Activated T-helper 1 cell treated with anti-CD3 and anti-CD28 coated beads, Interleukin-12 subunit alpha, Interleukin-12 subunit beta, Interleukin-2, Interleukin-4 antibody, amounts not matched to agents 30 ng/mL and 10 ng/mL and 1 ng/mL, durations not matched to agents 14 hours and 24 hours and 36 hours (primary cell): ENCODE measurements at regions of chr2 and their contacts with region 1.

Region 1: GRCh38 chr2:64260817-64261216 is 116.6 kb upstream of the PELI1 start:
- DNase-seq: peak; percentile 29
- H3K4me3 Mint-ChIP-seq: peak overlapping the region; percentile 68
- H3K27ac Mint-ChIP-seq: peak overlapping the region; percentile 87
- H3K4me1 Mint-ChIP-seq: peaks cover 10% of the 10 kb centered on the region
- H3K27me3 Mint-ChIP-seq: peaks cover 2% of the 10 kb centered on the region

Region 2: DNA sequence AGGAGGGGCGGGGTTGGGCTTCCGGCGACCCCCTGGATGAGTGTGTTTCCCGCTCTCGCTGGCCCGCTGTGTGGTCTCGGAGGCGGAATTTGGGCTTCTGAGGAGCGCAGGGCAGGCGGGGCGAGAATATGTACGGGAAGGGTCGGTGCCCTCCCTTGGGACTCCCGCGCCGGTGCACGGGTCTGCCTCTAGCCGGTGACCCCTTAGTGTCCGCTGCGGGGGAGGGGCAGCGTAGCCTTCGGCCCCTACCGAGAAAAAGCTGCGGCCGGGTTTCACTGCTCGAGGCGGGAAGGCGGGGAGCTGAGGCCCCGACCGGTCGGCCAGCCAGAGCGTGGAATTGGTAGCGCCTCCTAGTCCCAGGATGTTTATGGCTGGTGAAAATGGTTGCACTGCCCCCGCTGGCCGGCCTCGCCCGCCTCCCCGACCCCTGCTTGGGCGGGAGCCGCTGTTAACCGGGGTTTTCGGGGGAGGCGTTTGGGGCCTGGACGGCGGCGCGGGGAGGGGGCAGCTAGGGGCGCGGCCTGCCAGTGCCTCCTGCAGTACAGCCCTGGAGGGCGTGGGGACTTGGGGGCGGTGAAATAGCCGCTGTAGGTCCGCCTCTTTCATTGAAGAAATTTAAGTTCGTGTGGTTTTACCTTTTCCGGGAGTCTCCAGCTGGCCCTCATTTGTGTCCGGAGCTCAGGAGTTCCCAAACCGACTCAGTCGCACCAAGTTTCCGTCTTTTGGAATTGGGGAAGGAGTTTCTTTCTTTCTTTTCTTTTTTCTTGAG is 419.4 kb before region 1 on chr2 and contains the start of gene UGP2:
- intact Hi-C with region 1: no loop called
- DNase-seq: peak; percentile 83
- H3K4me3 Mint-ChIP-seq: peak within 1 kb of the TSS; percentile 99
- H3K27ac Mint-ChIP-seq: peak within 1 kb of the TSS; percentile 99
- H3K4me1 Mint-ChIP-seq: peaks cover 47% of the 10 kb centered on the region
- H3K27me3 Mint-ChIP-seq: no peaks in the 10 kb centered on the region
- total RNA-seq, gene UGP2: 60.3 and 65.9 TPM in 2 replicates

Region 3: DNA sequence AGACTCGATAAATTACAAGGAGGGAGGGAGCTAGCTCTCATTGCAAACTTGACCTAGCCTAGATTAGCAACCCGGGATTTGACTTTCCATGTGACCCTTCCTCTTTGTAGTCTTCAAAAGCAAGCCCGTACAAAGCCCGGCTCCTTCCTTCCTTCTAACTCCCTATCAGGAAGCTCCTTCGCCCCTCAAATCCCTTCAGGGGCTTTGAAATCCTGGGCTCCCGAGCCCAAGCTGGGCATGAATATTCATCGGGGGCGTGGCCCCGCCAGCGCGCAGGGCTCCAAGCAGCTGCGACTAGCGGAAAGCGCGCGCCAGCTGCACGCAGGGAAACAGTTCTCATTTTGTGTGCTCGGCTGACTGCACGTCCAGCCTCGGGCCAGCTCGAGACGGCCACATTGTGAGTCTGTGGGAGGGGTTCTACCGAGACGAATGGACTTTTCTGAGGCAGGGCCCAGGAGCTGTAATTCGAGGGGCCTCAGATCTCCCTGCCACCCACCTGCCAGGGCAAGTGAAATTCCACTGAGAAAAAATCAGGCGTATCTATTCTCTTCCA is 32.6 kb before region 1 on chr2:
- intact Hi-C with region 1: loop called (anchors 5 kb)
- DNase-seq: peak; percentile 54
- H3K4me3 Mint-ChIP-seq: peak overlapping the region; percentile 80
- H3K27ac Mint-ChIP-seq: peak overlapping the region; percentile 86
- H3K4me1 Mint-ChIP-seq: peaks cover 44% of the 10 kb centered on the region
- H3K27me3 Mint-ChIP-seq: peaks cover 7% of the 10 kb centered on the region

Region 4: GRCh38 chr2:64273524-64274398 is 12.9 kb after region 1 on chr2:
- intact Hi-C with region 1: loop called (anchors 2 kb)
- DNase-seq: no peak
- H3K4me3 Mint-ChIP-seq: no peak overlapping the region
- H3K27ac Mint-ChIP-seq: no peak overlapping the region
- H3K4me1 Mint-ChIP-seq: peaks cover 20% of the 10 kb centered on the region
- H3K27me3 Mint-ChIP-seq: no peaks in the 10 kb centered on the region

Region 5: GRCh38 chr2:64374686-64375085 is 113.9 kb after region 1 on chr2:
- intact Hi-C with region 1: no loop called
- DNase-seq: no peak
- H3K4me3 Mint-ChIP-seq: no peak overlapping the region
- H3K27ac Mint-ChIP-seq: no peak overlapping the region
- H3K4me1 Mint-ChIP-seq: no peaks in the 10 kb centered on the region
- H3K27me3 Mint-ChIP-seq: peaks cover 7% of the 10 kb centered on the region